Tibial artery (tissue), 4 donors: ENCODE measurements at regions of chr1 and their contacts with region 1.

Region 1: DNA sequence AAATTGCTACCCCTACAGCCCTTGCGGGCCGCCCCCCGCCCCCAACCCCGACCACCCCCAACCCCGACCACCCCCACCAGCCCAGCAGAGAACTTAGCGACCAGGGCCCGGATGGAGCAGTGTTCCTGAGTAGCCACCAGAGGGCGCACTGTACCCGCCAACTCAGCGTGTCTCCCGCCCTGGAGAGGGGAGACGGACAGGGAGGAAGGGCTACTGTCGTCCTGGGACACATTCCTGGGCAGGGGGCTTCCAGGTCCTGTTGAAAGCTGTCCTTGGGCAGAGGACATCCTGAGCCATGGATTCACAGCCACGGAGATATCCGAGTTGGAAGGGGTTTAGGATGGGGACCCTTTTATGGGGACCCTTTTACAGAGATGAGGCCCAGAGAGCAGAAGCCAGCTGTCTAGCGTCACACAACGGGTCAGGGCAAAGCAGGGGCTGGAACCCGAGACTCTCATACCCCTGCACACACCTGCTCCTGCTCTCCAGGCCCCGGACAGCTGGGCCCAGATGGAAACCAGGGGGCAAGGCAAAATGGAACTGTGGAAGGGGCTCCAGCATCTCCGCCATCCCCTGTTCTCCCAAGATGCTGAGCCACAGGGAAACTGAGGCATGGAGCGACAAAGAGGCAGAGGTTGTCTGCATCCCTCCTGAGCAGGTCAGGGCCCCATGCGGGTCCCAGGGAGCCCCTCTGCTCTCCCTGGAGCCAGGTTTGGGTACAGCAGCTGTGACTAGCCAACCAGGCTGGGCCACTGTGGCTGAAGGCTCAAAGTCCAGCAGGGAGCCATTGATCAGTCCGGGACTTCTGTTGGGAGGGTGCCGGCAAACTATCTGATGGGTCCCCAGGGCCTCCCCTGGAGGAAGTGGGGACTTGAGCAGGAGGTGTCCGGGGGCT is 25.0 kb upstream of the LAPTM5 start:
- DNase-seq: peak; percentile 47 to 79
- H3K4me3 ChIP-seq: no peak overlapping the region
- H3K27ac ChIP-seq: no peak overlapping the region
- H3K4me1 ChIP-seq: peaks cover 0 to 8% (median 0%) of the 10 kb centered on the region in 4 donors
- H3K27me3 ChIP-seq: peaks cover 0 to 39% of the 10 kb centered on the region in 2 donors
- CTCF ChIP-seq: peak; percentile 73 to 75

Region 2: DNA sequence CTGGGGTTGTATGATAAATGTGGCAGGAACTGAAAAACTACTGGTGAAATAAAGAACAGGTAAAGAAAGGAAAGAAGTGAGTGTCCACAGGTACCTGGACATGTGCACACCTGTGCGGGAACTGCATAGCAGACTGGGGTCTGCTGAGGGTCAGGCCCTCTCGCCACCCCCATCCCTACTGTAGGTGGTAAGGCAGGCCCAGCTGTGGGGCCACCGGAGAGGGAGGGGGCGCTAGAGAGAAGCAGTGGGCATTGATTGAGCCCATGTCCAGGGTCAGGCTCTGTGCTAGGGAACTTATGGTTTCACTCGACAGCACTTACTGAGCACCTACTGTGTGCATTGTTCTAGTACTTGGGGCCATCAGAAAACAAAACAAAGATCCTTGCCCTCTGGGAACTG is 459.8 kb before region 1 on chr1:
- intact Hi-C with region 1: no loop called
- DNase-seq: peak in 1 of 2 donors; percentile 23
- H3K4me3 ChIP-seq: no peak overlapping the region
- H3K27ac ChIP-seq: no peak overlapping the region
- H3K4me1 ChIP-seq: no peaks in the 10 kb centered on the region
- H3K27me3 ChIP-seq: peaks cover 0 to 63% of the 10 kb centered on the region in 2 donors
- CTCF ChIP-seq: no peak

Region 3: GRCh38 chr1:30719406-30720270 is 63.0 kb before region 1 on chr1:
- intact Hi-C with region 1: loop called (anchors 2 kb)
- DNase-seq: no peak
- H3K4me3 ChIP-seq: peak overlapping the region; percentile 52 to 57
- H3K27ac ChIP-seq: peak overlapping the region; percentile 91 to 97
- H3K4me1 ChIP-seq: peaks cover 3 to 21% (median 5%) of the 10 kb centered on the region in 4 donors
- H3K27me3 ChIP-seq: no peaks in the 10 kb centered on the region
- CTCF ChIP-seq: no peak

Region 4: DNA sequence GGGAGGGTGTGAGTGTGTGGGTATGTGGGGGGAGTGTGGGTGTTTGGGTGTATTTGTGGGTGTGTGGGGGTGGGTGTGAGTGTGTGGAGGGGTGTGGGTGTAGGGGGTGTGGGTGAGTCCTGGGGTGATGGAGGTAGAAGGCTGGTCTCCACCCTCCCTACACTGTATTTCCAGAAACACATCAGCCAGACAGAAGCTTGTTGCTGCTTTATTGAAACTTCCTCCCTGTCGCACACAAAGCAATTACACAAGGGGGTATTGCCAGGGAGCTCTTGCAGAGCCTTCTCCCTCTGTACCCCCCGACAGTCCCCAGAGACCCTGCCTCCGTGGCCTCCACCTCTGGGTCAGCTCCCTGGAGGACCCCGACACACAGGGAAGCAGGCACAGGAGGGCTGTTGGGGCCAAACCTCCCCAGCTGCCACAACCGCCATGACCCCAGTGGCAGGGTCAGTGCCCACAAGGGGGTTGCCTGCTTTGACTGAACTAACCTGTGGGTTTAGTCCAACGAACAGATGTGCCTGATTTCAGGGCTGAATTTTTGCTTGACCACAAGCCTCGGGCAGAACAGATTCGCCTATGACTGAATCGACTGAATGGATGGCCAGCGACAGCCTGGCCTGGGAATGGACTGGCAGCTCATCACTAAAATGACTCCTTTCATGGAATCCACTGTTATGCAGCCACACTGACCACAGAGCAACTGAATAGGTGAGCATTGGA is 50.2 kb before region 1 on chr1:
- intact Hi-C with region 1: no loop called
- DNase-seq: no peak
- H3K4me3 ChIP-seq: no peak overlapping the region
- H3K27ac ChIP-seq: no peak overlapping the region
- H3K4me1 ChIP-seq: no peaks in the 10 kb centered on the region
- H3K27me3 ChIP-seq: peaks cover 0 to 5% of the 10 kb centered on the region in 2 donors
- CTCF ChIP-seq: no peak

Region 5: DNA sequence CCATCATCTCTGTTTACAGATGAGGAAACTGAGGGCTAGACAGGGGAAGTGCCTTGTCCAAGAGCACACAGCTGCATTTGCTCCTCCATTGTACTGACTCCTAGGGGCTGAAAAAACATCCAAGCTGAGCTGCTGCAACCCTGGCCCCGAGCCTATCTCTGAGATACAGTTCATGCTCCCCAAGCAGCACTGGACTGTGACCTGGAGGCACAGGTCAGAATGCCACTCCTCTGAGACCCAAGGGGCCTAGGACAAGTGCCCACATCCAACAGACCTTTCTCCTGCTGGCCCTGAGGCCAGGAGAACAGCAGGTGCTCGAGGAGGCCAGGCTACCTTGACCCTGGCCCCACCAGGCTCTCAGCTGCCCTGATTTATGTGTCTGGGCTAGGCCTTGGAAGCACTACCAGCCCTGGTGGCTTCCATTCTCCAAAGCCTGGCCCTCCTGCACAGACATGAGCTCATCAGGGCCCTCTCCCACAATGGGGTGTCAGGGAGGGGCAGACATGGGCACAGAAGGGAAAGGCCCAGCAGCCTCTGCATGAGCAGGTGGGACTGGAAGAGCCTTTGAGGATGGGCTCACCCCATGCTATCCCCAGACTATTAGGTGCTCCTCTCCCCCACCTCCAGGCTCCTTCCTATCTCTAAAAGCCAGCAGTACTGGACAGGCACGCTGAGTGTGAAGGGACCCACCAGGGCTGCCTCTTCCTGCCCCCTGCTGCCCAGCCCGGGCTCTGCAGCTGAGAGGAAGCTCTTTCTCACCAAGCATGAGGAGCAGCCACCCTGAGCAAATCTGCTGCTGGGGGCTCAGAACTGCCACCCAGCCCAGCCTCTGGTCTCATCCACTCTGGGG is 962.7 kb after region 1 on chr1:
- intact Hi-C with region 1: no loop called
- DNase-seq: peak; percentile 37 to 82
- H3K4me3 ChIP-seq: no peak overlapping the region
- H3K27ac ChIP-seq: no peak overlapping the region
- H3K4me1 ChIP-seq: peaks cover 0 to 10% (median 4%) of the 10 kb centered on the region in 4 donors
- H3K27me3 ChIP-seq: no peaks in the 10 kb centered on the region
- CTCF ChIP-seq: peak; percentile 69 to 75